Activated naive CD4-positive, alpha-beta T cell treated with anti-CD3 and anti-CD28 coated beads for 36 hours (primary cell): ENCODE measurements at regions of chr2 and their contacts with region 1.

Region 1: DNA sequence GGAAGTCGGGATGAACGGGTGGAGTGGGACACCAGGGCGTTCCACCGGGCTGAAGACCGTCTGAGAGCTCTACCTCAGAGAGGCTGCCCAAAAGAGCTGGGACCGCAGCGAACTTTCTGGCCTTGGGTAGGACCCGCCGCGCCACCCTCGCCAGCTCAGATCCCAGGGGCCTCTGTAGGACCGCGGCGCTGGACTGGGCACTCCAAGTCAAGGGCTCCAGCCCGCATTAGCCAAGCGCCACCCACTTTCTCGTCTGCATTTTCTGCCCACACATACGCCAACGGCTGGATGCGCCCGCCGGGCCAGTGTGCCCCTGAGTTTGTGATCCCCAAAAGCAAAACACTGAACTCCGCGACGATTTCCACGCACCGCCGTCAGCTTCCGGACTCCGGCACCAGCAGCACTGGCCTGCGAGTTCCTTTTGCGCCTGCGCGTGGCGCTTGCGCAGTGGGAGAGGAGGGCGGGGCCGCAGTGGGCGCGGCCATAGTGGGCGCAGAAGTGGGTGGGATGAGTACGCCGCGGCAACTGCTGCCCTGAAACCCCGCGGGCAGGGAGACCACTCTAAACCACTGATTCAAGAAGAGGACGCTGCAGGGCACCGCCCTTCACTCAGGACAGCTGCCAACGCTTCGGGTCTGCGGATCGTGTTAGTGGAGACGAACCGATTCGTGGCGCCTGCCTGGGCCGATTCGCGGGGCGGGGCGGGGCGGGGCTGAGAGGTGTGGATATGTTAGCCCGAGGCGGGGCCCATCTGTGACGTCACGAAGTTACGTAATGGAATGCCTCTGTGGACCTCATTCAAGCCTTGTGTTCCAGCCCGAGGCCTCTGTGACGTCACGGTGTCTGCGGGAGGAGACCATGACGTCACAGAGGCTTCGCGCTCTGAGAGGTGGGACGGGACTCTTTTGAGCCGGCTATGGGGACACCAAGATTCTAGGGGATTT is 10.5 kb downstream of the OSR1 start:
- DNase-seq: peak; percentile 94
- H3K4me3 Mint-ChIP-seq: peak overlapping the region; percentile 95
- H3K27ac Mint-ChIP-seq: peak overlapping the region; percentile 96
- H3K4me1 Mint-ChIP-seq: peaks cover 26% of the 10 kb centered on the region
- H3K27me3 Mint-ChIP-seq: peaks cover 37% of the 10 kb centered on the region

Region 2: GRCh38 chr2:17753803-17754663 is 1593.9 kb before region 1 on chr2 and contains the starts of genes GEN1 and SMC6:
- CTCF ChIA-PET with region 1: no interaction called
- intact Hi-C with region 1: loop called (anchors 10 kb)
- DNase-seq: peak; percentile 90
- H3K4me3 Mint-ChIP-seq: peak within 1 kb of the TSS; percentile 85
- H3K27ac Mint-ChIP-seq: peak within 1 kb of the TSS; percentile 96
- H3K4me1 Mint-ChIP-seq: peaks cover 31% of the 10 kb centered on the region
- H3K27me3 Mint-ChIP-seq: no peaks in the 10 kb centered on the region
- total RNA-seq, gene GEN1: 13.4 to 15.5 TPM
- total RNA-seq, gene SMC6: 21.6 to 22.8 TPM

Region 3: DNA sequence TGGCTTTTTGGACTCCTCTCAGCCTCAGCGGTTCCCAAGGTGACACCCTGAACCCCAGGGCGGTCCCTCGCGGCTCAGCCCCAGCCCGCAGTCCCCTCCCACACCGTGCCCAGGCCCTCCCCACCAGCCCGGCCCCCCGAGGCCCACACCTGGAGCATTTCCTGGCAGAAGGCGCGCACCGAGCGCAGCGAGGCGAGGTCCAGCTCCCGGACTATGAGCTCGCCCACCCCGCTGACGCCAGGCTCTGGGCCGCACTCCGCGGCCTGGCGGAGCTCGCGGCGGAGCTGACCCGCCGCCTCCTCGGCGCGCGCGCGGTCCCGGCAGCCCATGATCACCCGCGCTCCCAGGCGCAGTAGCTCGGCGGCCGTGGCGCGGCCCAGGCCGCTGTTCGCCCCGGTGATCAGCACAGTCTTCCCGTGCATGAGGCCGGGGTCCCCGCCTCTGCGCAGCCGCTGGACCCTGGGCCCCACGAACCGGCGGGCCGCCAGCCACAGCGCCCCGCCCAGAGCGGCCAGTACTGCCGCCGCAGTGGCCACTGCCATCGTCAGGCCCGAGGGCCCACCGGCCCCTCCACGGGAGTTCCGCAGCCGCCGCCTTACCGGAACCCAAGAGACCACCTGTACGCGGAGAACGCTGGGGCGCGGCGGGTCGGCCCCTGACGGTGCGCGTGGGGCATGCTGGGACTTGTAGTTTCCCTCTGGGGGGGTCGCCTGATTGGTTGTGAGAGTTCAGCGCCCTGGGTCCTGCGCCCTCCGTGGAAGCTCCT is 787.7 kb before region 1 on chr2 and contains the start of gene RDH14:
- CTCF ChIA-PET with region 1: no interaction called
- intact Hi-C with region 1: loop called (anchors 1 kb)
- DNase-seq: peak; percentile 94
- H3K4me3 Mint-ChIP-seq: peak within 1 kb of the TSS; percentile 84
- H3K27ac Mint-ChIP-seq: peak within 1 kb of the TSS; percentile 89
- H3K4me1 Mint-ChIP-seq: peaks cover 35% of the 10 kb centered on the region
- H3K27me3 Mint-ChIP-seq: no peaks in the 10 kb centered on the region
- total RNA-seq, gene RDH14: 11.4 to 11.6 TPM

Region 4: GRCh38 chr2:18677280-18677679 is 670.6 kb before region 1 on chr2:
- CTCF ChIA-PET with region 1: no interaction called
- intact Hi-C with region 1: no loop called
- DNase-seq: no peak
- H3K4me3 Mint-ChIP-seq: no peak overlapping the region
- H3K27ac Mint-ChIP-seq: no peak overlapping the region
- H3K4me1 Mint-ChIP-seq: peaks cover 2% of the 10 kb centered on the region
- H3K27me3 Mint-ChIP-seq: no peaks in the 10 kb centered on the region

Region 5: GRCh38 chr2:19046986-19047780 is 300.7 kb before region 1 on chr2:
- CTCF ChIA-PET with region 1: no interaction called
- intact Hi-C with region 1: no loop called
- DNase-seq: no peak
- H3K4me3 Mint-ChIP-seq: no peak overlapping the region
- H3K27ac Mint-ChIP-seq: no peak overlapping the region
- H3K4me1 Mint-ChIP-seq: no peaks in the 10 kb centered on the region
- H3K27me3 Mint-ChIP-seq: no peaks in the 10 kb centered on the region

Region 6: GRCh38 chr2:19868705-19869580 is 521.1 kb after region 1 on chr2:
- CTCF ChIA-PET with region 1: no interaction called
- intact Hi-C with region 1: loop called (anchors 2 kb)
- DNase-seq: peak; percentile 67
- H3K4me3 Mint-ChIP-seq: peak overlapping the region; percentile 83
- H3K27ac Mint-ChIP-seq: peak overlapping the region; percentile 47
- H3K4me1 Mint-ChIP-seq: peaks cover 22% of the 10 kb centered on the region
- H3K27me3 Mint-ChIP-seq: no peaks in the 10 kb centered on the region

Region 7: GRCh38 chr2:20097879-20098714 is 750.2 kb after region 1 on chr2:
- CTCF ChIA-PET with region 1: no interaction called
- intact Hi-C with region 1: loop called (anchors 1 kb)
- DNase-seq: peak; percentile 88
- H3K4me3 Mint-ChIP-seq: no peak overlapping the region
- H3K27ac Mint-ChIP-seq: no peak overlapping the region
- H3K4me1 Mint-ChIP-seq: peaks cover 3% of the 10 kb centered on the region
- H3K27me3 Mint-ChIP-seq: peaks cover 10% of the 10 kb centered on the region